ENCODE measurements at regions of chr21 and their contacts with region 1.

Region 1: DNA sequence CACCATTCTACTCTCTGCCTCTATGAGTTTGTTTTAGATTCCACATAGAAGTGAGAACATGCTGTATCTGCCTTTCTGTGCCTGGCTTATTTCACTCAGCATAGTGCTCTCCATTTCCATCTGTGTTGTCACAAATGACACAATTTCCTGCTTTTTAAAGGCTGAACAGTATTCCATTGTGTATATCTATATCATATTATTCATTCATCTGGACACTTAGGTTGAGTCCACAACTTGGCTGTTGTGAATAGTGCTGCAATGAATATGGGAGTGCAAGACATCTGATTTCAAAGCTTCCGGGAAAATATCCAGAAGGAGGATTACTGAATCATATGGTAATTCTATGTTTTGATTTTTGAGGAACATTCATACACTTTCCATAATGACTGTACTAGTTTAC is 20.1 kb upstream of the DONSON start:
- H3K4me3 ChIP-seq: no peak overlapping the region
- H3K27ac ChIP-seq: no peak overlapping the region
- H3K4me1 ChIP-seq: no peaks in the 10 kb centered on the region
- CTCF ChIP-seq: no peak

Region 2: GRCh38 chr21:33572350-33572749 is 36.2 kb before region 1 on chr21:
- CTCF ChIA-PET with region 1: interaction called, 17 read pairs
- POLR2A ChIA-PET with region 1: no interaction called
- H3K4me3 ChIP-seq: no peak overlapping the region
- H3K27ac ChIP-seq: no peak overlapping the region
- H3K4me1 ChIP-seq: no peaks in the 10 kb centered on the region
- CTCF ChIP-seq: no peak

Region 3: GRCh38 chr21:33588485-33589335 is 19.8 kb before region 1 on chr21 and contains the start of gene DONSON:
- CTCF ChIA-PET with region 1: interaction called, 79 read pairs
- POLR2A ChIA-PET with region 1: interaction called, 20 read pairs
- H3K4me3 ChIP-seq: peak within 1 kb of the TSS; percentile 69
- H3K27ac ChIP-seq: peak within 1 kb of the TSS; percentile 89
- H3K4me1 ChIP-seq: peaks cover 4% of the 10 kb centered on the region; the same call in 1 of the 2 replicates
- CTCF ChIP-seq: no peak

Region 4: GRCh38 chr21:33619726-33620125 is 11.2 kb after region 1 on chr21:
- CTCF ChIA-PET with region 1: interaction called, 47 read pairs
- POLR2A ChIA-PET with region 1: no interaction called
- H3K4me3 ChIP-seq: no peak overlapping the region
- H3K27ac ChIP-seq: no peak overlapping the region
- H3K4me1 ChIP-seq: no peaks in the 10 kb centered on the region
- CTCF ChIP-seq: no peak

Region 5: GRCh38 chr21:33789697-33790096 is 181.1 kb after region 1 on chr21:
- CTCF ChIA-PET with region 1: interaction called, 10 read pairs
- POLR2A ChIA-PET with region 1: no interaction called
- H3K4me3 ChIP-seq: no peak overlapping the region
- H3K27ac ChIP-seq: no peak overlapping the region
- H3K4me1 ChIP-seq: peaks cover 4% of the 10 kb centered on the region; the same call in 1 of the 2 replicates
- CTCF ChIP-seq: no peak

Region 6: DNA sequence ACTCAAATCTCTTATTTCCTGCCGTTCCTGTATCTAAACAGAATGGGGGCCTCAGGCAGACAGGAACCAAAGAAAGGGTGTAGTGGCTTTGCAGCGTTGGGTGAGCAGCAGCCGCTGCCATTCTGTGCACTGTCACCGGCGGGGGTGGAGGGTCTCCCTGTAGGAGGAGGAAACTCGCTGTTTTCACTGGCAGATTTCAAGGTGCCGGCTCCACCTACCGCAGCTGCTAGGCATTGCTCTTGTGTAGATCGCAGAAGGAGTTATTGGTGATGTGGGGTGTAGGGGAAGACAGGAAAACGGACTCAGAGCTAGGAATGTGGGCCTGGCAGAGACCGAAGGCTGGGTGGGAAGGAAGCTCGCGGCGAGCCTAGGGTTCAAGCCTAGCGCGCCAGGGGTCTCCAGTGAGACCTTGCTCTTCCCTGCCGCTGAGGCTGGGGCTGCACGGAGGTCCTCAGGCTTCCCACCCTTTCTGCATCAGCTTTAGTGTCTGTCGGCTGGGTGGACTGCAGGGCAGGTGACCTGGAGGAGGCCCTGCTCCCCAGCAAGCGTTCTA is 286.3 kb after region 1 on chr21:
- CTCF ChIA-PET with region 1: interaction called, 16 read pairs
- POLR2A ChIA-PET with region 1: no interaction called
- H3K4me3 ChIP-seq: no peak overlapping the region
- H3K27ac ChIP-seq: no peak overlapping the region
- H3K4me1 ChIP-seq: peaks cover 6% of the 10 kb centered on the region; the same call in 1 of the 2 replicates
- CTCF ChIP-seq: peak; percentile 94

Region 7: GRCh38 chr21:33901412-33902288 is 293.1 kb after region 1 on chr21:
- CTCF ChIA-PET with region 1: interaction called, 15 read pairs
- POLR2A ChIA-PET with region 1: no interaction called
- H3K4me3 ChIP-seq: no peak overlapping the region
- H3K27ac ChIP-seq: no peak overlapping the region
- H3K4me1 ChIP-seq: no peaks in the 10 kb centered on the region
- CTCF ChIP-seq: peak; percentile 56

Region 8: GRCh38 chr21:33924079-33924765 is 315.7 kb after region 1 on chr21:
- CTCF ChIA-PET with region 1: no interaction called
- POLR2A ChIA-PET with region 1: no interaction called
- H3K4me3 ChIP-seq: no peak overlapping the region
- H3K27ac ChIP-seq: no peak overlapping the region
- H3K4me1 ChIP-seq: no peaks in the 10 kb centered on the region
- CTCF ChIP-seq: peak; percentile 94

Measured in HEK293 (cell line).